Activated CD8-positive, alpha-beta memory T cell treated with anti-CD3 and anti-CD28 coated beads, Interleukin-2, amount 10 ng/mL, durations not matched to agents 7 days and 5 days (primary cell): ENCODE measurements at regions of chr4 and their contacts with region 1.

Region 1: DNA sequence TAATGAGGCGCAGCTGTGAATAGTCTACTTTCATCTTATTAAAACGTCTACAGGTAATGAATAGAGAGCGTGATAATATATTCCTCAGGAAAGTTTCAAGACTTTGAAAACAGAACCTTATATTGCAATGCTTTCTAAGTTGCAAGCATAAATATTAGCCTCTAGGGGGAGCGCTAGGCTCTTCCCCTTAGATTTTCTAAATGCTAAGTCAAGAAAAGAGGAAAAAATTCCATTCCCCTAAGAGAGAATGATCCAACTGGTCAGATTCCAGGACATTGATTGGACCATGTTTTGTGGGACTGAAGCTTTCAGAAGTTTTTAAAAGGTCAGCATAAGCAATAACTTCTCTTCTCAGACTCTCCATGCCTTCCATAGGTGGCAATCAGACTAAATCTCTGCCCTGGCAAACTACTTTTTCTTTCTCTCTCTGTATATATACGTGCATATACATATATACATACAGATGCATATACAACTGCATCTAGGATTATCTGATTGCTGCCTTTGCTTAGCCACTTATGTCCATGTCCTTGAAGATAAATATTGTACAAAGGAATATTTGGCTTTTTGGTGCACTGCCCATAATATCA is 492.9 kb downstream of the INPP4B start:
- DNase-seq: no peak
- ATAC-seq: no peak
- H3K4me3 Mint-ChIP-seq: no peak overlapping the region
- H3K27ac Mint-ChIP-seq: peak overlapping the region; percentile 60
- H3K4me1 Mint-ChIP-seq: peaks cover 70% of the 10 kb centered on the region
- H3K27me3 Mint-ChIP-seq: no peaks in the 10 kb centered on the region

Region 2: DNA sequence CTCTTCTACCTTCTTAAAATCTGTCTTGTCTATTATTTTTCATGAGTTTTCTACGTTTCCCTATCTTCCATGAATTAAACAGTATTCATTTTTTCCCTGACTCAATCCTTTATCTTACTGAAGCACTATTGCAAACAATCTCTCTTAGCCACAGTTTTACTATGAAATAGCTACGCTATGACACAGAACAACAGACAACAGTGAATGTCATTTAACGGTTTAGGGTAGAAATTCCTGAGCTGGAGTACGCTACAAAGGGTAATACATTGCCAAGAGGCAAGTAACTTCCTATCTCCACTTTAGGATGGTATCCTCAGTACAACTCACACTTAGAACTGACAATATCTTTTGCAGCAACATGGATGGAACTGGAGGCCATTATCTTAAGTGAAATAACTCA is 59.7 kb before region 1 on chr4:
- CTCF ChIA-PET with region 1: no interaction called
- DNase-seq: no peak
- ATAC-seq: no peak
- H3K4me3 Mint-ChIP-seq: no peak overlapping the region
- H3K27ac Mint-ChIP-seq: no peak overlapping the region
- H3K4me1 Mint-ChIP-seq: peaks cover 19% of the 10 kb centered on the region
- H3K27me3 Mint-ChIP-seq: no peaks in the 10 kb centered on the region

Region 3: DNA sequence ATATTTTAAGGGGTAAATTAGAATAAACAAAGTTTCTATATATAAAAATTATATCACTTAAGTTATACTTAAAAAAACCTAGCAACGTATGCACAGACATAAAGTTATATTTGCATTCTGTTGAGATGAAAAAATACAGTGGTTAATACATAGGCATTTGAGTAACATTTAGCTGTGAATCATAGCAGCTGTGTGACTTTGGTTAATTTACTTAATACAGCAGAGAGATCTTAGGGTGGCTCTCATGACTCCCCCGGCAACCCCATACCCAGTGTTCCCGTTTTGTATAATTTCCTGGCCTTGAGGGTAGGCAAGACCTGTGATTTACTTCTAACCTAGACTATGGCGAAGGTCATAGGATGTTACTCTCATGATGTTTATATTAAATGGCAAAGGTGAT is 12.0 kb before region 1 on chr4:
- CTCF ChIA-PET with region 1: interaction called, 10 read pairs
- DNase-seq: no peak
- ATAC-seq: no peak
- H3K4me3 Mint-ChIP-seq: no peak overlapping the region
- H3K27ac Mint-ChIP-seq: no peak overlapping the region
- H3K4me1 Mint-ChIP-seq: peaks cover 8% of the 10 kb centered on the region
- H3K27me3 Mint-ChIP-seq: no peaks in the 10 kb centered on the region

Region 4: DNA sequence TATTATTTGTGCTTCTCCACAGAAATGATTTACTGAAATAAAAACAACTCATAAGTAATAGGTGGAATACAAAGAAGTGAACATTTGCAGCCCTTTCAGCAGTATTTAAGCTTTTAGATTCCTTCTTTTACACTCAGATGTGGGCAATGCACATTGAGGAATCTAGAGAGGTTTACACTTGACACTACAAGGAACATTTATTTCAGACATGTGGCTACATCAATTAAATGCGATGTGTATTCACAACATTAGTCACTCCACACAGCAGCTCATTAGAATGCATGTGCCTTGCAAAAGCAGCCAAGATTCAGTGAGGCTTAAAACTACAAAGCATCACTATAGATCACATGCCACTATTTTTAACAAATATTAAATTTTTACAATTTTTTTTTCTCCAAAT is 12.1 kb after region 1 on chr4:
- CTCF ChIA-PET with region 1: interaction called, 14 read pairs
- DNase-seq: no peak
- ATAC-seq: no peak
- H3K4me3 Mint-ChIP-seq: no peak overlapping the region
- H3K27ac Mint-ChIP-seq: no peak overlapping the region
- H3K4me1 Mint-ChIP-seq: peaks cover 35% of the 10 kb centered on the region
- H3K27me3 Mint-ChIP-seq: no peaks in the 10 kb centered on the region

Region 5: DNA sequence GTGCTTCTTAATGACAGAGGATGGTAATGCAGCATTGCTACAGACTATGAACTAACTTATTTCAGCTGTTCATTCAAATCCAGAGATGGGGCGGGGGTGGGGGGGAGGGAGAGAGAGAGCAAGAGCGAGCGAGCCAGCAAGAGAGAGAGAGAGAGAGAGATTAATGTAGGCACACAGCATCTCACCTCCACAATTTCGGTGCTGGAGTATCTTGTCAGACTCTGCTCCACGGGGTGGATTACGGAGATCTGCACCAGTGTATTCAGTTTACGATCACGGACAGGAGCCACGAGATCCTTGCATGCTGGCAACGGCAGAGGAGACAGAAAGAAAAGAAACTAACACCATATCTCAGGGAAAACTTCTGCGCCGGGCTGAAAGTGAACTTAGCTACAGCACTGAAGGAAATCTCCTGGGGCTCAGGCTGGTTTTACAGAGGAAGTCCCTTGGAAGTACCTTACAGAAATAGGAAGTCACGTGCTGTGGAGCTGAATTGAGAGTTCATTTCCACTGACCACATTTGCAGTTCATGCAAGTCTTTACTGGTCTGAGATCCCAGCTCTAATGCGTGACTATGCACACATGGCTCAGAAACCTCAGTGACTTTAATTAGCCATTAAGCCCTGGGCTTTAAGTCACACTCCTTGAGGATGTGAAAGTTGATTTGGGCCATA is 51.9 kb after region 1 on chr4:
- CTCF ChIA-PET with region 1: interaction called, 19 read pairs
- DNase-seq: peak; percentile 81
- ATAC-seq: peak; percentile 62
- H3K4me3 Mint-ChIP-seq: peak overlapping the region; percentile 89
- H3K27ac Mint-ChIP-seq: peak overlapping the region; percentile 99
- H3K4me1 Mint-ChIP-seq: peaks cover 55% of the 10 kb centered on the region
- H3K27me3 Mint-ChIP-seq: no peaks in the 10 kb centered on the region

Region 6: DNA sequence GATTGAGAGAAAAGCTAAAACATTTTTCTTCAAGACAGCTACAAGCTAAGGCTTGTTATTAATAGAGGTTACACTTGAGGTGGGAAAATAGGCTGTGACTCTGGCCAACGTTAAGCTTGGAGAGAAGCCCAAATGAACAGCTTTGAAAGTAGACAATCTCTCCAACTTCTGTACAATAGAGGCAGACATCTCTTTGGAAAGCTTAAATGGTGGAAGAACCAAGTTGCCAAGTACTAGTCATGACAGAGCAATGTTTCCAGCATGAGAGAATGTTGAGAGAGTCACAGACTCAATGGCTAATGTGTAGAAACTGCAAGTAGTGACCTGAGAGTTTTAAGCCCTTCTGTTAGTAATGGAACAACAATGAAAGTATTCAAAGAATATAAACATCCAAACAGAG is 194.7 kb after region 1 on chr4:
- CTCF ChIA-PET with region 1: no interaction called
- DNase-seq: no peak
- ATAC-seq: no peak
- H3K4me3 Mint-ChIP-seq: no peak overlapping the region
- H3K27ac Mint-ChIP-seq: no peak overlapping the region
- H3K4me1 Mint-ChIP-seq: peaks cover 25% of the 10 kb centered on the region
- H3K27me3 Mint-ChIP-seq: no peaks in the 10 kb centered on the region

Region 7: DNA sequence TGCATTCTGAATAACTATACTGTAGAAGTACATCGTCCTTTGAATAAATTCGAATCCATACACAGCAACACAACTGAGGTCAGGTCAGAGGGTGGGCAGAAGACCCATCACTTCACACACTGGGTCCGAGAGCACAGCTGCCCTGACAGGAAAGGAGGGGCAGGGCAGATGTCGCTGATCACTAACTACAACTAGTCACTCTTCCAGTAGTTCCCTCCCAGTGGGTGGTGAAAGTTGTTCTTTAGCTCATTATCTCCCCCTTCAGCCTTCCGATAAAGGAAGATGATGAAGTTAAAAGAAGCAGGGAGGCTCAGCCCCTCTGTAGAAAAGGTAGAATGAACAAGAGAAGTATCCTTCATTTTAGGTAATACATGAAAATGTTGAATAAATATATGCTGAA is 214.0 kb after region 1 on chr4:
- CTCF ChIA-PET with region 1: interaction called, 26 read pairs
- DNase-seq: peak; percentile 70
- ATAC-seq: peak; percentile 90
- H3K4me3 Mint-ChIP-seq: peak overlapping the region; percentile 79
- H3K27ac Mint-ChIP-seq: peak overlapping the region; percentile 90
- H3K4me1 Mint-ChIP-seq: peaks cover 37% of the 10 kb centered on the region
- H3K27me3 Mint-ChIP-seq: no peaks in the 10 kb centered on the region